A549 (cell line): ENCODE measurements at regions of chr17 and their contacts with region 1.

Region 1: GRCh38 chr17:17729620-17730249 is 48.5 kb downstream of the RAI1 start:
- DNase-seq: peak; percentile 48 to 79
- ATAC-seq: peak; percentile 63 to 78
- H3K4me3 ChIP-seq: no peak overlapping the region
- H3K27ac ChIP-seq: peak overlapping the region; percentile 30 to 79; a peak in 4 of 6 replicates
- H3K4me1 ChIP-seq: peaks cover 82% of the 10 kb centered on the region
- CTCF ChIP-seq: peak; percentile 56
- EP300 ChIP-seq: no peak
- POLR2A ChIP-seq: no peak
- RAD21 ChIP-seq: peak; percentile 55 to 67

Region 2: DNA sequence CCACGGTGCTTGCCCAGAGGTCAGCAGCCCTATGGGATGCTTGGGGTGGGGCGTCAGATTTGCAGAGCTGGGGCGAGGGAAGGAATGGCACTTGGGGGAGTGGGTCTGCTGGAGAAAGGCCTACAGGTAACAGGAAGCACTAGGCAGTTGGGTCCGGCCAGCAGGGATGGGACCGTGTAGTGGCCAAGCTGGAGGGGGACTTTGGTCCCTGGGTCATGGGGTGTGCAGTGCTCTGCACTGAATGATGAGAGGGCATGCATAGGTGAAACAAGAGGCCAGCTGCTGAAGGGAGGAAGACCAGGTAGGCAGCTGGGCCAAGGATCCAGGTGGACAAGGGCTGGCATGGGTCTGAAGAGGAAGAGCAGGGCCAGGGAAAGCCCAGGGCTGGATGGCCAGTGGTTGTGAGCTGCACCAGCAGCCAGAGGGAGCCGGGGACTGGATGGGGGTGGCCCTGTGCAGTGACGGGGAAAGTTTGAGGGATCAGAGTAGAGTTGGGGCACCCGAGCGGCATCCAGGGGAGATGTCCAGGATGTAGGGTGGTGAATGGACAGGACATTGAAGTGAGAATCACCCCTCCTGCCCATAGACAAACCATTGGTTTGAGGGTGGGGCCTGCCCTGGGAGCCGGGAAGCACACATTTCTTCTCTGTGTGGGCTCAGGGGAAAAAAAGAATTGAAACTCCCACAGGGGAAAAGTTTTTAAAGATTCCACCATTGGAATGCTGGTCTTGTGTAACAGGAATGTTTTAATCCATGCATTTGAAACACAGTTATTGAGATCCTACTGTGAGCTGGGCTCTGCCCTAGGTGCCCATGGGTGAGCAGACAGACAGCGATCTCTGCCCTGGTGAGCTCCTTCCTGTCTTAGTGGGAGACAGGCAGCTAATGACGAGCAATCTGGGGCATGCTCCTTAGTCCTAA is 23.3 kb before region 1 on chr17:
- CTCF ChIA-PET with region 1: interaction called, 10 read pairs
- POLR2A ChIA-PET with region 1: no interaction called
- DNase-seq: no peak
- ATAC-seq: no peak
- H3K4me3 ChIP-seq: no peak overlapping the region
- H3K27ac ChIP-seq: peak overlapping the region in 1 of 2 experiments; percentile 95; a peak in 3 of 6 replicates
- H3K4me1 ChIP-seq: peaks cover 69% of the 10 kb centered on the region
- CTCF ChIP-seq: no peak
- EP300 ChIP-seq: no peak
- POLR2A ChIP-seq: no peak
- RAD21 ChIP-seq: no peak

Region 3: DNA sequence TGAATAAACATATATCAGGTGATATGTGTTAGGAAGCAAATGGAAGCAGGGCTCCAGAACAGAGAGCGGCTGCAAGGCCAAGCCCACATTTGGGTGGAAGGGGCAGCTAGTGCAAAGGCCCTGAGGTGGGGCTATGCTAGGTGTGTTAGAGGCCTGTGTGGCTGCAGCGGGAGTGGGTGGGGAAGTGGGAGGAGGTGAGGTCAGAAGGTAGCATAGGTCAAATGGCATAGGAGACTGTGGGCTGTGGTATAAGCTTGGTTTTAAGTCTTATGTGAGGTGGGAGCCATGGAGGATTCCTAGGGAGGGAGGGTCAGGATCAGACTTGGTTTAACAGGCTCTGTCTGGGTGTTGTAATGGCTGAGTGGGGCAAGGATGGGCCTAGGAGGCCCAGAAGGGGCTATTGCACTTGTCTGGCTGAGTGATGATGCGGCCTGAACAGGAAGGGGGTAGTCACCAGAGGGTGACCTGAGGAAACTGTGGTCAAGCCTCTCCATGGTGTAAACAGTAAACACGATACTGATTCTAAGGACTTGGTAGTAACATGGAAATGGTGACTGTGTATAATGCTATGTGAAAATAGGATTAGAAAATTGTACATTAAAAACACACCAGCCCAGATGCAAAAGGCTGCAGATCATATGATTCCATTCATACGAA is 17.3 kb before region 1 on chr17:
- CTCF ChIA-PET with region 1: interaction called, 32 read pairs
- POLR2A ChIA-PET with region 1: no interaction called
- DNase-seq: no peak
- ATAC-seq: no peak
- H3K4me3 ChIP-seq: no peak overlapping the region
- H3K27ac ChIP-seq: peak overlapping the region; percentile 94 to 95
- H3K4me1 ChIP-seq: peaks cover 77% of the 10 kb centered on the region
- CTCF ChIP-seq: no peak
- EP300 ChIP-seq: no peak
- POLR2A ChIP-seq: no peak
- RAD21 ChIP-seq: no peak